Caco-2 (cell line): ENCODE measurements at regions of chr22 and their contacts with region 1.

Region 1: GRCh38 chr22:49970528-49971231 is 10.1 kb downstream of the PIM3 start:
- DNase-seq: peak; percentile 95 to 98
- H3K4me3 ChIP-seq: peak overlapping the region; percentile 59
- H3K4me3 Mint-ChIP-seq: peak overlapping the region; percentile 72
- H3K27ac Mint-ChIP-seq: peak overlapping the region; percentile 86
- H3K4me1 ChIP-seq: peaks cover 28% of the 10 kb centered on the region
- H3K4me1 Mint-ChIP-seq: no peaks in the 10 kb centered on the region
- H3K27me3 ChIP-seq: no peaks in the 10 kb centered on the region
- H3K27me3 Mint-ChIP-seq: no peaks in the 10 kb centered on the region
- CTCF ChIP-seq: no peak

Region 2: DNA sequence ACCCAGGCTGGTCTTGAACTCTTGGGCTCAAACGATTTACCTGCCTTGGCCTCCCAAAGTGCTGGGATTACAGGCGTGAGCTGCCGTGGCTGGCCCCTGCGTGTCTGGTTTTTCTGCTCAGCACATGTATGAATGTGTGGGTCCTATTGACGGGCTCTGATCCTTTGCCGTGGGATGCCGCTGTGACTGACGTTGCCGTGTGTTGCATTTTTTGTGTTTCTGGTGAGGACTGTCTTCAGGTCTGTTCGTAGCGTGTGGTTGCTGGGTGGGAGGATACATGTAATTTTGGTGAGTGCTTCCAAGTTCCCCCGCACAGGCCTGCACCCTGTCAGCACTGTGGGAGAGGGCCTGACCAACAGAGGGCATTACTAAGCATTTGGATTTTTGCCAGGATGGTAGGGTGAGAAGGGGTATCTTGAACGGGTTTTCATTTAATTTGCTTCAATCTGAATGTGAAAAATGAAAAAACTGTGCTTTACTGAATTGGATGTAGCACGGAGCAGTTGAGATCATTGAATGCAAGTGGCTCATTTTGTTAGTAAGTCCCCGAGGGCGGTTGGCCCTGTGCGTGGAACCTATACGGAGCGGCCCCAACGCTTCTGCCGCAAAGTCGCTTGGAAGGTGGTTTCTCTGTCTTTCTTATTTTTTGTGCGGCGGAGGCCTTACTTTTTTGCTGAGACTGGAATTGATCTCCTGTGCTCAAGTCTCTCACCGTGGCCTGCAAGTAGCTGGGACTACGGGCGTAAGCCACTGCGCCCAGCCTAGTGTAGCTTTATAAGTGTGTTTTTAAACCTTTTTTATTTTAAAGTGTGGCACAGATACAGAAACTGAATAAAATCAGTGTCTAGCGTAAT is 108.8 kb before region 1 on chr22:
- CTCF ChIA-PET with region 1: no interaction called
- POLR2A ChIA-PET with region 1: no interaction called
- intact Hi-C with region 1: no loop called
- DNase-seq: no peak
- H3K4me3 ChIP-seq: no peak overlapping the region
- H3K4me3 Mint-ChIP-seq: no peak overlapping the region
- H3K27ac Mint-ChIP-seq: no peak overlapping the region
- H3K4me1 ChIP-seq: no peaks in the 10 kb centered on the region
- H3K4me1 Mint-ChIP-seq: no peaks in the 10 kb centered on the region
- H3K27me3 ChIP-seq: no peaks in the 10 kb centered on the region
- H3K27me3 Mint-ChIP-seq: no peaks in the 10 kb centered on the region
- CTCF ChIP-seq: no peak

Region 3: GRCh38 chr22:49951000-49951677 is 19.5 kb before region 1 on chr22:
- CTCF ChIA-PET with region 1: no interaction called
- POLR2A ChIA-PET with region 1: interaction called, 20 read pairs
- intact Hi-C with region 1: no loop called
- DNase-seq: peak; percentile 89 to 91
- H3K4me3 ChIP-seq: no peak overlapping the region
- H3K4me3 Mint-ChIP-seq: peak overlapping the region; percentile 75
- H3K27ac Mint-ChIP-seq: peak overlapping the region; percentile 99
- H3K4me1 ChIP-seq: peaks cover 82% of the 10 kb centered on the region
- H3K4me1 Mint-ChIP-seq: peaks cover 8% of the 10 kb centered on the region
- H3K27me3 ChIP-seq: no peaks in the 10 kb centered on the region
- H3K27me3 Mint-ChIP-seq: no peaks in the 10 kb centered on the region
- CTCF ChIP-seq: no peak